MCF 10A (cell line): ENCODE measurements at regions of chr11 and their contacts with region 1.

Region 1: DNA sequence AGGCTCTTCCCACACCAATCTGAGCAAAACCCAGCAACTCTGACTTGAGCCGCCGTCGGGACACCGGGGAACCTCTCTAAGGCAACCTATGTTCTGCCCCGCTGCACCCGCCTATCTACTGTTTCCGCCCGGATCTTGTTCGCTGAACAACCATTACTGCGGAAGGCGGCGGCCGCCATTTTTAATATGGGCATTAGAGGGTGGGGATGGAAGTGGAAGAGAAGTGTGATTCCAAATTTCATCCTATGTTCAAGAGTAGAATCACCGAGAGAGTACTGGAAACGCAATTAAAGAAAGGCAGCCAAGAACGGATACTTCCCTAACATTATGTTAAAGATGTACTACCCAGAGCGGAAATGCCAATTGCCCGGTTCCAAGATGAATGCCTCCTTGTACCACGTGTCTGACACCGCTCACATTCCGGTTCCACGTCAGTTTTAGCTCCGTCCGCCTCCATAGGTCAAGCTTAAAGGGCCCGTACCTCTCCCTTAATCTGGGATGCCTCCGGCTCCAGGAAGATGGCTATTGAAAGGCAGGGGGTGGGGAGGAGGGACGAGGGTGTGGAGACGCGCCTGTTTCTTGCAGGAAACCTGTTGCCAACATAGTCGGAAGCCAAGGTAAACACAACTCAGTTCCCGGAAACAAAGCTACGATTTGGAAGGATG is at the start of gene DPAGT1:
- DNase-seq: peak; percentile 99
- H3K4me3 Mint-ChIP-seq: peak within 1 kb of the TSS; percentile 78
- H3K27ac Mint-ChIP-seq: peak within 1 kb of the TSS; percentile 99
- H3K4me1 Mint-ChIP-seq: peaks cover 16% of the 10 kb centered on the region
- H3K27me3 Mint-ChIP-seq: no peaks in the 10 kb centered on the region
- CTCF ChIP-seq: no peak
- total RNA-seq, gene DPAGT1: 55.6 and 58.8 TPM in 2 replicates

Region 2: DNA sequence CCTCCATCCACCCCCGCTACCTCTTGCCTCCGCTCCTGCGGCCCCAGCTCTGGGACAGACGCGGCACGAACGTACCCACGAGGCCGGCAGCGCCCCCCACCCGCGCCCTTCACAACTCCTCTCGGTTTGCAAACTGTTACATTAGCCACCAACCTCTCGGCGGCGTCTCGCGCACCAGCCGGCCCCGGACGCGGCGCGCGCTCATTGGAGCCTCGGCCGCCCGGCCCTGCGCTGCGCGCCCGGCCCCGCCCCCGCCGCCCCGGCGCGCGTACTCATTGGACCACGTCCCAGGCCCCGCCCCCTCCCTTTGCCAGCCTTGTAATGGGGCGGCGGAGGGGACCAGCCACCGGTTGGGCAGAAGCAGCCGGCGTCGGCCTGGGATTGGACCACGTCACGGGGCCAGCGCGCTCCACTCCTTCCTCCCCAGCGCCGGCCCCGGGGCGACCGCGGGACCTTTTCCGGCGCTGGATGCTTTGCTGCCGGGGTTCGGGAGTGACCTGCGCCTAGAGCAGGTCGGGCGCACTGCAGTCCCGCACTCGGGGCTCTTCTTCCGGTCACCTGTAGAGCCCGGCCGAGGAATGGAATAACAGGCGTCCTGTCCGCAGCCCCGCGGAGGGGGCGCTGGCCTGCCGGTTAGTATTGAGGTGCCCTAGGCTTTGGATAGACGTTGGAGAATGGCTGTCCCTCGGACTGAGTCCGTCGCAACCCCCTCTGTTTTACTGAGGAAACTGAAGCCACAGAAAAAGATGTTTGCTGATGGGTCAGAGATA is 44.7 kb before region 1 on chr11 and contains the start of gene HYOU1:
- CTCF ChIA-PET with region 1: interaction called, 4 read pairs
- POLR2A ChIA-PET with region 1: interaction called, 8 read pairs
- intact Hi-C with region 1: loop called (anchors 2 kb)
- DNase-seq: peak; percentile 97
- H3K4me3 Mint-ChIP-seq: peak within 1 kb of the TSS; percentile 96
- H3K27ac Mint-ChIP-seq: peak within 1 kb of the TSS; percentile 98
- H3K4me1 Mint-ChIP-seq: peaks cover 19% of the 10 kb centered on the region
- H3K27me3 Mint-ChIP-seq: no peaks in the 10 kb centered on the region
- CTCF ChIP-seq: peak; percentile 29
- total RNA-seq, gene HYOU1: 398 and 664 TPM in 2 replicates

Region 3: GRCh38 chr11:119084663-119085436 is 17.0 kb before region 1 on chr11 and contains the start of gene HMBS:
- CTCF ChIA-PET with region 1: no interaction called
- POLR2A ChIA-PET with region 1: interaction called, 59 read pairs
- intact Hi-C with region 1: no loop called
- DNase-seq: peak; percentile 93
- H3K4me3 Mint-ChIP-seq: peak within 1 kb of the TSS; percentile 94
- H3K27ac Mint-ChIP-seq: peak within 1 kb of the TSS; percentile 81
- H3K4me1 Mint-ChIP-seq: peaks cover 10% of the 10 kb centered on the region
- H3K27me3 Mint-ChIP-seq: no peaks in the 10 kb centered on the region
- CTCF ChIP-seq: no peak
- total RNA-seq, gene HMBS: 38.4 and 51.3 TPM in 2 replicates

Region 4: GRCh38 chr11:119168471-119169281 is 66.8 kb after region 1 on chr11 and contains the start of gene NLRX1:
- CTCF ChIA-PET with region 1: interaction called, 3 read pairs
- POLR2A ChIA-PET with region 1: interaction called, 21 read pairs
- intact Hi-C with region 1: no loop called
- DNase-seq: peak; percentile 85
- H3K4me3 Mint-ChIP-seq: peak within 1 kb of the TSS; percentile 82
- H3K27ac Mint-ChIP-seq: peak within 1 kb of the TSS; percentile 54
- H3K4me1 Mint-ChIP-seq: peaks cover 15% of the 10 kb centered on the region
- H3K27me3 Mint-ChIP-seq: no peaks in the 10 kb centered on the region
- CTCF ChIP-seq: peak; percentile 86
- total RNA-seq, gene NLRX1: 16.7 and 18.9 TPM in 2 replicates